ENCODE measurements at regions of chr2 and their contacts with region 1.

Region 1: DNA sequence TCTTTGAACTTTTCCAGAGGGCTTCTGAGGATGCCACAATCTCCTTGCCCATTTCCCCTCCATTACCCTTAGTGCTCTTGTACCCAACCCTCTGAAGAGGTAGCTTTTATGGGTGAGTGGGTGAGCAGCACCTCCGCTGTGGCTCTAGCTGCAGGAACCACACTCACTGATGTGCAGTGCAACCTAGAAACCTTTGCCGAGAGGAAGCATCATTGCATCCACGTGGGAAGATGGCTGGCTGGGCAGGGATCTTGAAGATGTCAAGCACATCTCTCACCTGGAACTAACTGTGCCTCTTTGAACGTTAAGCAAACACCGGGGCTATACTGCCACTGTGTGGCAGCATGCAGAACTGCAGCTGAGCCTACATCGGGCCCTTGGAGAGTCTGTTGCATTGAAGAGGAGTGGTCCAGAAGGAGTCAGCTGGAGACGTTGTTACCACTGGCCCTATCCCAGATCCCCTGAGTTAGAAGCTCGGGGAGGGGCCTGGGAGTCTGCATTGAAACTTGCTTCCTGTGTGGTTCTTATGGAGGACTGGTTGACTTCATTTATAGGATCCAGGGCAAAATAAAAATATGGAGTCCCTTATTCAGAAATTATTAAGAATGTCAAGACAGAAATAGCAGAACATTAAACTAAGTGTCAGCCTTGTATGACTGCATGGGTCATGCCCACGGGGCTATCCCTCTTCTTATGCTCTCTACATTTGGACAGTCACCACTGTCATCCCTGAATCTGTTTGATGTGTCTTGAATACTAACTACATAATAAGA is 28.7 kb downstream of the IGFBP5 start:
- DNase-seq: peak; percentile 47 to 64 (median 54)
- H3K4me3 ChIP-seq: no peak overlapping the region
- H3K4me3 Mint-ChIP-seq: no peak overlapping the region
- H3K27ac ChIP-seq: no peak overlapping the region
- H3K27ac Mint-ChIP-seq: no peak overlapping the region
- H3K4me1 ChIP-seq: no peaks in the 10 kb centered on the region
- H3K4me1 Mint-ChIP-seq: no peaks in the 10 kb centered on the region
- H3K27me3 ChIP-seq: no peaks in the 10 kb centered on the region
- H3K27me3 Mint-ChIP-seq: peaks cover 0 to 17% of the 10 kb centered on the region in 2 donors

Region 2: GRCh38 chr2:216222650-216223352 is 443.8 kb before region 1 on chr2:
- CTCF ChIA-PET with region 1: interaction called, 8 read pairs
- POLR2A ChIA-PET with region 1: no interaction called
- intact Hi-C with region 1: loop called (anchors 2 kb)
- DNase-seq: peak in 2 of 5 donors; percentile 5 to 10
- H3K4me3 ChIP-seq: no peak overlapping the region
- H3K4me3 Mint-ChIP-seq: no peak overlapping the region
- H3K27ac ChIP-seq: no peak overlapping the region
- H3K27ac Mint-ChIP-seq: peak overlapping the region in 4 of 7 donors; percentile 0 to 20 (median 1)
- H3K4me1 ChIP-seq: peaks cover 13% of the 10 kb centered on the region
- H3K4me1 Mint-ChIP-seq: peaks cover 10 to 18% (median 15%) of the 10 kb centered on the region in 4 donors
- H3K27me3 ChIP-seq: no peaks in the 10 kb centered on the region
- H3K27me3 Mint-ChIP-seq: no peaks in the 10 kb centered on the region

Region 3: GRCh38 chr2:216450784-216451183 is 215.9 kb before region 1 on chr2:
- CTCF ChIA-PET with region 1: no interaction called
- POLR2A ChIA-PET with region 1: no interaction called
- intact Hi-C with region 1: no loop called
- DNase-seq: no peak
- H3K4me3 ChIP-seq: no peak overlapping the region
- H3K4me3 Mint-ChIP-seq: no peak overlapping the region
- H3K27ac ChIP-seq: no peak overlapping the region
- H3K27ac Mint-ChIP-seq: no peak overlapping the region
- H3K4me1 ChIP-seq: no peaks in the 10 kb centered on the region
- H3K4me1 Mint-ChIP-seq: no peaks in the 10 kb centered on the region
- H3K27me3 ChIP-seq: no peaks in the 10 kb centered on the region
- H3K27me3 Mint-ChIP-seq: no peaks in the 10 kb centered on the region

Region 4: GRCh38 chr2:216651351-216651881 is 15.2 kb before region 1 on chr2:
- CTCF ChIA-PET with region 1: interaction called, 19 read pairs
- POLR2A ChIA-PET with region 1: no interaction called
- intact Hi-C with region 1: no loop called
- DNase-seq: no peak
- H3K4me3 ChIP-seq: no peak overlapping the region
- H3K4me3 Mint-ChIP-seq: no peak overlapping the region
- H3K27ac ChIP-seq: no peak overlapping the region
- H3K27ac Mint-ChIP-seq: no peak overlapping the region
- H3K4me1 ChIP-seq: no peaks in the 10 kb centered on the region
- H3K4me1 Mint-ChIP-seq: no peaks in the 10 kb centered on the region
- H3K27me3 ChIP-seq: no peaks in the 10 kb centered on the region
- H3K27me3 Mint-ChIP-seq: peaks cover 2 to 12% of the 10 kb centered on the region in 2 donors

Measured in CD4-positive, alpha-beta memory T cell (primary cell).